Astrocyte of the cerebellum (primary cell): ENCODE measurements at regions of chr9 and their contacts with region 1.

Region 1: GRCh38 chr9:81689343-81690190 is at the start of gene TLE1:
- DNase-seq: peak; percentile 99
- H3K4me3 ChIP-seq: peak within 1 kb of the TSS; percentile 96
- CTCF ChIP-seq: no peak

Region 2: DNA sequence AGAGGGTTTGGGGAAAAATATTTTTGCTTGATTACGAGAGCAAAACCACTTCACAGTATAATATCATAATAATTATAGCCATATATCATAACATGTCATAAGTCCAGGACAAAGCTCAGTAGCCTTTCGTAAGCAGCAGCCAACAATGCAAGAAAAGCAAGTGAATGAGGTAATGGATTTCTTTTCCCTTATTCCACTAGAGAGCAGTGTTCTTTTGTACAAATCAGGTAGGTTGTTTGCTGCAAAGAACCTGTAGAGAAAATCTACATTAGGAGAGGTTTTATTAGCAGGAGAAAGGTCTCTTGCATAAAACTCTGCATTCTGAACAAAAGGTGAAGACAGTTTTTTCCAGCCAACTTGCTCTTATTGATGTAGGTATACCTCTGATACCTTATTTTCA is 1084.4 kb before region 1 on chr9:
- in situ Hi-C with region 1: loop called (anchors 25 kb)
- DNase-seq: peak; percentile 48
- H3K4me3 ChIP-seq: no peak overlapping the region
- CTCF ChIP-seq: peak; percentile 45

Region 3: GRCh38 chr9:82223442-82223841 is 533.9 kb after region 1 on chr9:
- in situ Hi-C with region 1: no loop called
- DNase-seq: no peak
- H3K4me3 ChIP-seq: no peak overlapping the region
- CTCF ChIP-seq: no peak